GM13976 (cell line): ENCODE measurements at regions of chr4 and their contacts with region 1.

Region 1: DNA sequence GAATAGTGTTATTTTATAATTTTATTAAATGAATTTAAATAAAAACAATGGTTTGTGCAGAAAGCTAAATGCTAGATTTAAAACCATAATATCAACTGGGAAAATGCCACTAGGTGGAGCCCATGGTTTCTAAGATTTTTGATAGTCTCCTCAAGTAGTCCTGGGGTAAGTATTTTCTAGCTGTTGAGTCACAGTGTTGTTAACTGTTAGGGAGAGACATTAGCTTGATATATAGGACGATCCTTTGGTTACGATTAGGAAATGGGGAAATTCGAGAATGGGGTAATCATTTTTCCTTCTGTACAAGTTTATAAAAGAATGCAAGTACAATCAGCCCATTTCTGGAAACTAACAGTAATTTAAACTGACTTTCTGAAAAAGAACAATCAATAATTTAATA is 378.4 kb downstream of the ANKRD50 start:
- DNase-seq: peak; percentile 12
- CTCF ChIP-seq: peak; percentile 45

Region 2: GRCh38 chr4:125244848-125245450 is 910.8 kb after region 1 on chr4:
- in situ Hi-C with region 1: loop called (anchors 25 kb)
- DNase-seq: no peak
- CTCF ChIP-seq: no peak